IMR-90 (cell line): ENCODE measurements at regions of chr3 and their contacts with region 1.

Region 1: DNA sequence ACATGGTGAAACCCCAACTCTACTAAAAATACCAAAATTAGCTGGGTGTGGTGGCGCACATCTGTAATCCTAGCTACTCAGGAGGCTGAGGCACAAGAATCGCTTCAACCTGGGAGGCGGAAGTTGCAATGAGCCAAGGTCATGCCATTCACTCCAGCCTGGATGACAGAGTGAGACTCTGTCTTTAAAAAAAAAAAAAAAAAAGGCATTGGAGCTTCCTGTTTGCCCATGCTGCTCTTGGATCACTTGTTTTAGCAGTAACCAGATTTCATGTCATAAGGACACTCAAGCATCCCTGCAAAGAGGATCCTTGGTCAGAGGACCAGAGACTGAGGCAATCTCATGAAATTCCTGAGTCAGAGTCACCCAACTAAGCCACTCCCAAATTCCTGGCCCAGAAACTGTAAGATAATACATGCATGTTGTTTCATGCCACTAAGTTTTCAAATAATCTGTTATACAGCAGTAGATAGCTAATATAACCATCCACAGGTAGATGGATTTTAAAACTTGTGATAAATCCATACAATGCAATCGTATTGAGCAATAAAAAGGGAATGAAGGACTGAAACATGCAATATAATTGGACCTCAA is 82.0 kb upstream of the XXYLT1 start:
- DNase-seq: peak; percentile 89
- ATAC-seq: peak; percentile 92
- H3K4me3 ChIP-seq: no peak overlapping the region
- H3K27ac ChIP-seq: peak overlapping the region; percentile 86
- H3K4me1 ChIP-seq: 0 out of 2 replicates have a peak, but pooled peaks cover 5% of the 10 kb centered on the region
- H3K27me3 ChIP-seq: no peaks in the 10 kb centered on the region
- CTCF ChIP-seq: no peak
- POLR2A ChIP-seq: no peak
- RAD21 ChIP-seq: no peak

Region 2: GRCh38 chr3:195150181-195151118 is 202.5 kb before region 1 on chr3:
- CTCF ChIA-PET with region 1: no interaction called
- POLR2A ChIA-PET with region 1: no interaction called
- dilution Hi-C with region 1: no loop called
- in situ Hi-C with region 1: no loop called
- intact Hi-C with region 1: no loop called
- DNase-seq: peak; percentile 81
- ATAC-seq: peak; percentile 46
- H3K4me3 ChIP-seq: peak overlapping the region; percentile 28; the same call in 1 of the 2 replicates
- H3K27ac ChIP-seq: peak overlapping the region; percentile 95
- H3K4me1 ChIP-seq: peaks cover 42% of the 10 kb centered on the region
- H3K27me3 ChIP-seq: no peaks in the 10 kb centered on the region
- CTCF ChIP-seq: no peak
- POLR2A ChIP-seq: no peak
- RAD21 ChIP-seq: no peak

Region 3: GRCh38 chr3:195394700-195395099 is 41.7 kb after region 1 on chr3:
- CTCF ChIA-PET with region 1: interaction called, 6 read pairs
- POLR2A ChIA-PET with region 1: no interaction called
- dilution Hi-C with region 1: no loop called
- in situ Hi-C with region 1: no loop called
- intact Hi-C with region 1: loop called (anchors 5 kb)
- DNase-seq: peak; percentile 49
- ATAC-seq: peak; percentile 75
- H3K4me3 ChIP-seq: no peak overlapping the region
- H3K27ac ChIP-seq: no peak overlapping the region
- H3K4me1 ChIP-seq: peaks cover 5% of the 10 kb centered on the region; the same call in 1 of the 2 replicates
- H3K27me3 ChIP-seq: no peaks in the 10 kb centered on the region
- CTCF ChIP-seq: no peak
- POLR2A ChIP-seq: no peak
- RAD21 ChIP-seq: no peak